OCI-LY7 (cell line): ENCODE measurements at regions of chr6 and their contacts with region 1.

Region 1: GRCh38 chr6:89432875-89433251 is at the start of gene ANKRD6:
- DNase-seq: peak; percentile 79
- H3K4me3 ChIP-seq: peak within 1 kb of the TSS; percentile 70
- H3K27ac ChIP-seq: no peak within 1 kb of the TSS
- H3K4me1 ChIP-seq: peaks cover 22% of the 10 kb centered on the region
- CTCF ChIP-seq: peak; percentile 81
- total RNA-seq, gene ANKRD6: 2.2 and 2.4 TPM in 2 replicates

Region 2: DNA sequence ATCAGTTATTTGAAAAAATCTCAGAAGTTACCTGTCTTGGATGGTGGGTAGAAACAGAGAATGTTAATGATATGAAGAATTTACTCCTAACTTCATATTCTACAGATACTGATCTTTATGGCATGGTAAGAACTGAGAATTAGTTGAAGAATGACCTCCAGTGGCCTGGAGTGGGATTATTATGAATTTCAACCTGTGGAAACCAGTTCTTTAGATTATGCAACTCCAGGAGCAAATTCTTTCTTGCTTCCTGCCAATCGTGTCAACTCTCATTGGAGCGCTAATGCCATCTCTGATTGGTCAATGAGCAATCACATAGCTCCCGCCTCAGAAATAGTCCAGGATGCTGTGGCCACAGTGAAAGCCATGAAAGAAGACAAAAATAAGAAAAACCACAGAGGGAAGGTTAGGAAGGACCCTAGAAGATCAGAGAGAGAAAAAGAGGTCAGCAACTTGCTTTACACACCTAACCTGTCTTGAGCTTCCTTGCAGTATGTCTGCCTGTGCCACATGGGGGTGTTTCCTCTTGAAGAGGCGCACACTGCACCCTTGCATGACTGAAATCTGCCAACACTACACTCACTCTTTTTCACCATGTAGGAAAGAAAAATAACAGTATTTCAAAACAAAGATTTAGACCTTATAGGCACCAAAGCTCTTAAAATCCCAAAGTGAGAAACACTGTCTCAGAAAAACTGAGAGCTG is 165.3 kb after region 1 on chr6:
- CTCF ChIA-PET with region 1: no interaction called
- POLR2A ChIA-PET with region 1: no interaction called
- intact Hi-C with region 1: loop called (anchors 5 kb)
- DNase-seq: peak; percentile 48
- H3K4me3 ChIP-seq: no peak overlapping the region
- H3K27ac ChIP-seq: no peak overlapping the region
- H3K4me1 ChIP-seq: peaks cover 28% of the 10 kb centered on the region
- CTCF ChIP-seq: peak; percentile 68

Region 3: DNA sequence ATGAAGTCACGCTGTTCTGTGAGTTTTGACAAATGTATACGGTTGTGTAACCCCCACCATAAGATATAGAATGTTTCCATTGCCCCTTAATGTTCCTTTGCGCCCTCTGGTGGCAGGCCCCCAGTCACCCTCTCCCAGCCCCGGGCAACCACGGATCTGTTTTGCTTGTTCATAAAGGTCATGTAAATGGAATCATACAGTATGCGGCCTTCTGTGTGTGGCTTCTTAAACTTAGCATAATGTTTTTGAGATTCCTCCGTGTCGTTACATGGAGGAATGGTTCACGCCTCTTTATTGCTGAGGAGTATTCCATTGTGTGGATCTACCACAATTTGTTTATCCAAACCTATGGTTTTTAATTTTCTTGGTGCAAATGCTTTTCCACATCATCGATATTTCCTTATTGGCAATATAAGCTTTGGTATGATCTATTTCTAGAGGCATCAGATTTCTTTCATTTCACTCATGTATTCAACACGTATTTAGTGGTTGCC is 177.3 kb after region 1 on chr6:
- CTCF ChIA-PET with region 1: no interaction called
- POLR2A ChIA-PET with region 1: interaction called, 3 read pairs
- intact Hi-C with region 1: loop called (anchors 1 kb)
- DNase-seq: peak; percentile 72
- H3K4me3 ChIP-seq: no peak overlapping the region
- H3K27ac ChIP-seq: no peak overlapping the region
- H3K4me1 ChIP-seq: peaks cover 26% of the 10 kb centered on the region
- CTCF ChIP-seq: peak; percentile 99

Region 4: GRCh38 chr6:89630488-89630887 is 197.6 kb after region 1 on chr6:
- CTCF ChIA-PET with region 1: no interaction called
- POLR2A ChIA-PET with region 1: no interaction called
- intact Hi-C with region 1: no loop called
- DNase-seq: no peak
- H3K4me3 ChIP-seq: no peak overlapping the region
- H3K27ac ChIP-seq: no peak overlapping the region
- H3K4me1 ChIP-seq: no peaks in the 10 kb centered on the region
- CTCF ChIP-seq: no peak

Region 5: DNA sequence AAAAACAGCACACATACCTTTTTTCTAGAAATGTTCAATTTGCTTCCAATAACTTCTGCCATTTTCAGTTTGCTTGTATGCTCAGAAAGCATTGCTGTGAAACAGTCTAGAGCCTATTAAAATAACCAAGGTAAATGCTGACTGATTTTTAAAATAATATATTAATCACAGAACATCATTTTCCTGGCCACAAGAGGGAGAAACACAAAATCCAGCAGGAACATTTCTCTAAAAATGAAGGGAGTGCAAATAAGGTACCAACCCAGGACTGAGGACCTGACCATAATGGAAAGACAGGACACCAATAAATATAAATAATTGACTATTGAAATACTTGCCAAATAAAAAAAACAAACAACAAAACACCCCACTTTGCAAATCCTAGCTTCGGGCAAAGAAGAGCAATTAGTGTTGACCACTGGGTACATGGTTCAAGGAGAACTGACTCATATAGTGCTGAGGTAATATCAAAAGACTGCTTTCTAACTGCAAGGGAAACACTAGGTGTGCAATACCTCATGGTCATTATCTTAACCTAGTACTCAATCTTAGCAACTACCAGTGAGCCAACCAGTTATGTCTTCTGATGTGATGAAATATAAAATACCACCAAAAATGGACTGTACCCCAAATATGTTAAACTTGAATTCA is 343.8 kb after region 1 on chr6:
- CTCF ChIA-PET with region 1: no interaction called
- POLR2A ChIA-PET with region 1: no interaction called
- intact Hi-C with region 1: loop called (anchors 10 kb)
- DNase-seq: no peak
- H3K4me3 ChIP-seq: no peak overlapping the region
- H3K27ac ChIP-seq: no peak overlapping the region
- H3K4me1 ChIP-seq: no peaks in the 10 kb centered on the region
- CTCF ChIP-seq: no peak